Right lobe of liver (tissue), 6 donors: ENCODE measurements at regions of chr1 and their contacts with region 1.

Region 1: DNA sequence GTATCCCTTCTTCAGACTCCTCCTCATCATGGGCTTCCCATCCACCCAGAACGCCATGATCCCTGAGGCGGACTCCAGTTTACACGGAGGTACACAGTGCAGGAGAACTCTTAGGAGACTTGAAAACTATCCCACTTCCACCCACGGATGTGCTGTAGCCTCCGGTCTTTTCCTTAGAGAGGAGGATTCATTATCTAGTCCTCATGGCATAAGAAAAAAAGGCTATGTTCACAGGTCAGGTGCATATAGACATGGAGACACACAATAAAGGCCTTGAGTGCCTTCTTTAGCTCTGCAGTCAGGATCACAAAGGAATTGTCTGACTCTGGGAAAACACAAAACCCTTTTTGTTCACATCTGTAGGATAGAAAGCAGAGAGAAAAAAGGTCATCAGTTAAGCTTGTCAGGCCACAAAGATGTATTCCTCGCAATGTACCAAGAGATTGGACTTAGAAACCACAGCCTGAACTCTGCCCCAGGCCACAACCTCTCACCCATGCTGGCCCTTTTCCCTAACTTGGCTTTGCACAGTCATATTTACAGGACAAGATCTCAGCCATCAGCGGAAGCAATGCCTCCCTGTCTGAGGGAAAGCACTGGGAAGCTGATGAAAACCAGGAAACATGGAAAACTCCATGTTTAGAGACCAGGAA is 9.0 kb downstream of the CRP start:
- DNase-seq: peak; percentile 55 to 81 (median 73)
- ATAC-seq: peak; percentile 54 to 89 (median 85)
- H3K4me3 ChIP-seq: no peak overlapping the region
- H3K27ac ChIP-seq: peak overlapping the region; percentile 8 to 46 (median 29)
- H3K4me1 ChIP-seq: peaks cover 0 to 43% (median 13%) of the 10 kb centered on the region in 4 donors
- H3K27me3 ChIP-seq: no peaks in the 10 kb centered on the region
- CTCF ChIP-seq: no peak
- POLR2A ChIP-seq: no peak

Region 2: GRCh38 chr1:159580340-159580739 is 125.0 kb before region 1 on chr1:
- intact Hi-C with region 1: loop called in 1 of 2 experiments (anchors 10 kb)
- DNase-seq: no peak
- ATAC-seq: peak in 1 of 4 donors; percentile 55
- H3K4me3 ChIP-seq: no peak overlapping the region
- H3K27ac ChIP-seq: peak overlapping the region in 1 of 3 donors; percentile 88
- H3K4me1 ChIP-seq: peaks cover 0 to 38% (median 6%) of the 10 kb centered on the region in 4 donors
- H3K27me3 ChIP-seq: no peaks in the 10 kb centered on the region
- CTCF ChIP-seq: no peak
- POLR2A ChIP-seq: no peak